Activated naive CD4-positive, alpha-beta T cell treated with anti-CD3 and anti-CD28 coated beads for 36 hours (primary cell): ENCODE measurements at regions of chr2 and their contacts with region 1.

Region 1: GRCh38 chr2:230666885-230667712 is 45.5 kb upstream of the CAB39 start:
- DNase-seq: peak; percentile 62
- H3K4me3 Mint-ChIP-seq: no peak overlapping the region
- H3K27ac Mint-ChIP-seq: peak overlapping the region; percentile 11
- H3K4me1 Mint-ChIP-seq: peaks cover 80% of the 10 kb centered on the region
- H3K27me3 Mint-ChIP-seq: no peaks in the 10 kb centered on the region

Region 2: DNA sequence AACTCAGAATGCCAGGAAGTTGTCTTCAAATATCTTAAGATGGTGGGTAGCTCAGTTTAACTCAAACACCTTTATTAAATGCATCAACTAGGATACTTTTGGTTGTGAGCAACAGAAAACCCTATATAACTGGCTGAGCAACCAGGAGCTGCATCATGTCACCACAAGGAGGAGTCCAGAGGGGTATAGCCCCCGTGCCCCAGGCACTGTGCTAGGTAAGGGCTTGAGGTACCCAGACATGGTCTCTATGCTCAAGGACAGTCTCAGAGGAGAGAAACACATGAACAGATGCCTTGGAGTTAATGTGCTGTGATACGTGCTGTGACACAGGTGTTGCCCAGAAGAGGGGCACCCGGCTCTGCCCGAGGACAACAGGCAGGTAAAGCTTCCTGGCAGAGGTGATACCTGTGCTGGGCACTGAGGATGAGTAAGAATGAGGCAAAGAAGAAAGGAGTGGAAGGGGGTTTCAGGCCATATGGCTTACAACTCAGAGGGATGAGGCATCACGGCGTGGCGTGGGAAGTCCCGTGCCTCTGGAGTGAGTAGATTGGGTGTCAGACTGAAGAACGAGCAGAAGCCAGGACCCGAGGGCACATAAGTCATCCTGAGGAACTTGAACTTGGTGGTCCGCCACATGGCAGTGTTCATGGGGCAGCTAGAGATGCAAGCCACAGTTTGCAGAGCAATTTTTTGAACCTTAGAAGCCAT is 13.5 kb after region 1 on chr2:
- CTCF ChIA-PET with region 1: interaction called, 4 read pairs
- intact Hi-C with region 1: loop called (anchors 2 kb)
- DNase-seq: peak; percentile 72
- H3K4me3 Mint-ChIP-seq: no peak overlapping the region
- H3K27ac Mint-ChIP-seq: peak overlapping the region; percentile 25
- H3K4me1 Mint-ChIP-seq: peaks cover 30% of the 10 kb centered on the region
- H3K27me3 Mint-ChIP-seq: no peaks in the 10 kb centered on the region

Region 3: DNA sequence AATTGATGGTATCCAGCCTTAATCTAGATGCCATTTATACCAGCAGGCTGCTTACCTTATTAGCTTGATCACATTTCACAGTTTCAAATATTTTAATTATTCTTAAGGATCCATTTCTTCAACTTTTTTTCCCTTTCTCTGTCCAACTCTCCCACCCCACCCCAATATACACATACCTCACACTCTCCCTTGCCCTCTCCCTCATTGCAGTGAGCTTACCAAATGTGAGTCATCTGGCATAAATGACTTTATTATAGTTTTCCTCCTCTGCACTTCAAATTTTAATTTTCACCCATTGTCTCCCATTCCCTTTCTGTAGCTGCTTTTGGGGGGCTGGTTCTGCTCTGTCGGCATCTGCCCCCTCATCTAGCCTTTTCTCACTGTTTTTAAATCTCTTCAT is 444.9 kb after region 1 on chr2:
- CTCF ChIA-PET with region 1: no interaction called
- intact Hi-C with region 1: no loop called
- DNase-seq: no peak
- H3K4me3 Mint-ChIP-seq: no peak overlapping the region
- H3K27ac Mint-ChIP-seq: no peak overlapping the region
- H3K4me1 Mint-ChIP-seq: peaks cover 4% of the 10 kb centered on the region
- H3K27me3 Mint-ChIP-seq: no peaks in the 10 kb centered on the region

Region 4: DNA sequence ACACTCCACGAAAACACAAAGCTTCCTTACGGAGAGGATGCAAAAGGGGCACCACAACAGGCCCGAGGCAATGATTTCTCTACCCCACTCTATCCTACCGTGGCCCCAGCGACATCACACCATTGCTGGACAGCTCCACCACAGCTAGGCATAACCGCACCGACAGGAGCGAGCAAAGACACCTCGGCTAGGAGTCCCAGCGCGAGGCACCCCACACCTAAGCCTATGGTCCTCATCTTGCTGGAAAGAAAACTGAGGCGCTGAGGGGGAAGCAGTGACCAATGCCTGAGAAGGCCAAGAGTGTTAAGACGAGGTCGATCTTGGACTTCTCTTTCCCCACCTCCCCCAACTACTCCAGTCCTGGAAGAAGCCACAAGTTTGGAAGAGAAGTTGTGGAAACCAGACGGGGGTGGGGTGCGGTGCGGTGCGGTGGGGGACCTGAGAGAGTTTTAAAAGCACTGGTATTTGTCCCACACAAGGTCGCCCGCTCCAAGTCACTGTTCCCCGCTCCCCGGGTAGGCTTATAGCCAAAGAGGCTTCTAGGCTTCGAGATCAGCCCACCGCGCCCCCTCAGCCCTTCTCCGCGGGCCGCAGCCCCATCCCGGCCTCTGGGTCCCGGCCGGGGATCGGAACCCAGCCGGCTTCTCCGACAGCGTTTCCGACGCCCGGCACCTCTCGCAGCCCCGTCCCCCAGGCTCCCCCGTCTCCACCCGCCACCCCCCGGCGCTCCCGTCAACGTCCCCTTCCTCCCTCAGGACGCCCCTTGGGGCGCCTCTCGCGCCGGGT is 1113.2 kb after region 1 on chr2:
- CTCF ChIA-PET with region 1: no interaction called
- intact Hi-C with region 1: no loop called
- DNase-seq: peak; percentile 45
- H3K4me3 Mint-ChIP-seq: peak overlapping the region; percentile 92
- H3K27ac Mint-ChIP-seq: no peak overlapping the region
- H3K4me1 Mint-ChIP-seq: peaks cover 40% of the 10 kb centered on the region
- H3K27me3 Mint-ChIP-seq: no peaks in the 10 kb centered on the region